Posterior cingulate gyrus (tissue), 11 donors: ENCODE measurements at regions of chr3 and their contacts with region 1.

Region 1: DNA sequence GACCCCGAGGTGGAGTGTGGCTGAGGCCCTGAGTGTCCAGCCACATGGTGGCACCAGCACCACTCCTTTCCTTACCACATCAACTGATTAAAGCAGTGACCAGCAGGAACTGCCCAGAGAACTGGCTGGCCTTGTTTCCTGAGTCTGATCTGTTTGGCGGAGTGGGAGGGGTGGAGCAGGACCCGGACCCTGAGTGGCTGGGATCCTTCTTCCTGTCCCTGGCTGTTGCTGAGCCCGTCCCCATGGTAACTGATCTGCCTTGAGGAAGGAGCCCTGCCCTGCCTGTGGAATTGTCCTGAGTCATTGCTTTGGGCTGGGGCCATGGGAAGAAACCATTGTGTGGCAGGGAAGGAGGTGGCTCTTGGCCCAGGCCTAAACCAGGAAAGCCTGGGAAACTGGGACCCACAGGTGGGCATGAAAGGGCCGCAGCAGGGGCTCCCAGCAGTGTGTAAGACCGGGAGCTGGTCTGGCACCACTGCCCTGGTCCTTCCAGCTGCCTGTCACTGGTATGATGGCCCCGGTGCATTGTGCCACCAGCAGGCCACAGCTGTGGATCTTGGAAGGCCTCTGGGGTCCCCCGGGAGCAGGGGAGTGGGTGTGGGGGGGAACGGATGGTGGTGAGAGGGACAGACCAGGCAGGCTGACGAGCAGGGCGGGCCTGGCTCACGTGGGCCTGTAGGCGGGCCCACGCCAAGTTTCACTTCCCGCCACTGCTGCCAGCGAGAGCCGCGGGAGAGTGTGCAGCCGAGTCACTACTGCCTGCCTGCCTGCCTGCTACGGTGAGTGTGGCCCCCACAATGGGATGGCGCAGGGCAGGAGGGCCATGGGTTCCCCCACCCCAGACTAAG is 19.2 kb downstream of the ATRIP start:
- DNase-seq: peak; percentile 88 to 99 (median 94)

Region 2: GRCh38 chr3:48367201-48367600 is 98.6 kb before region 1 on chr3:
- intact Hi-C with region 1: no loop called
- DNase-seq: no peak

Region 3: GRCh38 chr3:48504051-48504946 is 38.5 kb after region 1 on chr3 and contains the start of gene SHISA5:
- intact Hi-C with region 1: loop called (anchors 5 kb)
- DNase-seq: peak; percentile 46 to 94 (median 70)

Region 4: GRCh38 chr3:48548729-48549705 is 83.3 kb after region 1 on chr3:
- intact Hi-C with region 1: loop called (anchors 1 kb)
- DNase-seq: peak; percentile 71 to 98 (median 92)